ENCODE measurements at regions of chr14 and their contacts with region 1.

Region 1: GRCh38 chr14:21092273-21093011 is 6.0 kb downstream of the ZNF219 start:
- DNase-seq: peak; percentile 91
- H3K4me3 ChIP-seq: no peak overlapping the region
- H3K27ac ChIP-seq: peak overlapping the region; percentile 39 to 58 (median 56)
- H3K4me1 ChIP-seq: peaks cover 0 to 50% (median 44%) of the 10 kb centered on the region in 4 donors
- H3K27me3 ChIP-seq: no peaks in the 10 kb centered on the region
- CTCF ChIP-seq: peak; percentile 100
- EP300 ChIP-seq: no peak
- POLR2A ChIP-seq: no peak

Region 2: GRCh38 chr14:20332788-20333493 is 759.5 kb before region 1 on chr14 and contains the start of gene CCNB1IP1:
- intact Hi-C with region 1: loop called (anchors 10 kb)
- DNase-seq: peak; percentile 86
- H3K4me3 ChIP-seq: peak within 1 kb of the TSS; percentile 56 to 59 (median 56)
- H3K27ac ChIP-seq: peak within 1 kb of the TSS; percentile 86 to 91 (median 90)
- H3K4me1 ChIP-seq: peaks cover 0 to 30% (median 15%) of the 10 kb centered on the region in 4 donors
- H3K27me3 ChIP-seq: no peaks in the 10 kb centered on the region
- CTCF ChIP-seq: no peak
- EP300 ChIP-seq: peak in 1 of 4 donors; percentile 15
- POLR2A ChIP-seq: peak; percentile 46 to 69
- total RNA-seq, gene CCNB1IP1: 43.2 to 55.8 (median 44.4) TPM

Region 3: DNA sequence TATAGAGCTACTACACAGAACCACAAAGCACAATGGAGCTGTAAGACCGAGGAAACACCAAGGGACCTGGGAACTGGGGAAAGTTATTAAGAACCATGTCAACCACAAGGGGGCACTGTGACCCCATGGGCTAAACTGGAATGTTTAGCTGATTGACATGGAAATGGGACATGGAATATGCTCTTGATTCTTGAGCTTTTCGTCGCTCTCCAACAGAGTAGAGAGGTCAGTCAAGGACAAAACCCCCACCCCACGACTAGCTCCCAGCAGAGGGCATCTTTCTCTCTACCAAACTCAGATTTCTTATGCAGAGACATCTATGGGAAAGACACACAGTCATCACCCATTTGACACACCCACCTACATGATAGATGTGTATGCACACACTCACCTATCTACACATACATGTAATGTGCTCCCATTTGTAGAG is 77.7 kb before region 1 on chr14:
- intact Hi-C with region 1: loop called (anchors 2 kb)
- DNase-seq: peak; percentile 93
- H3K4me3 ChIP-seq: no peak overlapping the region
- H3K27ac ChIP-seq: peak overlapping the region in 1 of 4 donors; percentile 12
- H3K4me1 ChIP-seq: peaks cover 0 to 14% (median 3%) of the 10 kb centered on the region in 4 donors
- H3K27me3 ChIP-seq: no peaks in the 10 kb centered on the region
- CTCF ChIP-seq: peak; percentile 93 to 96 (median 94)
- EP300 ChIP-seq: no peak
- POLR2A ChIP-seq: no peak

Region 4: GRCh38 chr14:21071225-21072030 is 21.0 kb before region 1 on chr14:
- intact Hi-C with region 1: loop called (anchors 1 kb)
- DNase-seq: peak; percentile 94
- H3K4me3 ChIP-seq: peak overlapping the region; percentile 60 to 85 (median 64)
- H3K27ac ChIP-seq: peak overlapping the region; percentile 87 to 93 (median 88)
- H3K4me1 ChIP-seq: peaks cover 0 to 39% (median 36%) of the 10 kb centered on the region in 4 donors
- H3K27me3 ChIP-seq: no peaks in the 10 kb centered on the region
- CTCF ChIP-seq: no peak
- EP300 ChIP-seq: no peak
- POLR2A ChIP-seq: no peak